ENCODE measurements at regions of chr5 and their contacts with region 1.

Region 1: DNA sequence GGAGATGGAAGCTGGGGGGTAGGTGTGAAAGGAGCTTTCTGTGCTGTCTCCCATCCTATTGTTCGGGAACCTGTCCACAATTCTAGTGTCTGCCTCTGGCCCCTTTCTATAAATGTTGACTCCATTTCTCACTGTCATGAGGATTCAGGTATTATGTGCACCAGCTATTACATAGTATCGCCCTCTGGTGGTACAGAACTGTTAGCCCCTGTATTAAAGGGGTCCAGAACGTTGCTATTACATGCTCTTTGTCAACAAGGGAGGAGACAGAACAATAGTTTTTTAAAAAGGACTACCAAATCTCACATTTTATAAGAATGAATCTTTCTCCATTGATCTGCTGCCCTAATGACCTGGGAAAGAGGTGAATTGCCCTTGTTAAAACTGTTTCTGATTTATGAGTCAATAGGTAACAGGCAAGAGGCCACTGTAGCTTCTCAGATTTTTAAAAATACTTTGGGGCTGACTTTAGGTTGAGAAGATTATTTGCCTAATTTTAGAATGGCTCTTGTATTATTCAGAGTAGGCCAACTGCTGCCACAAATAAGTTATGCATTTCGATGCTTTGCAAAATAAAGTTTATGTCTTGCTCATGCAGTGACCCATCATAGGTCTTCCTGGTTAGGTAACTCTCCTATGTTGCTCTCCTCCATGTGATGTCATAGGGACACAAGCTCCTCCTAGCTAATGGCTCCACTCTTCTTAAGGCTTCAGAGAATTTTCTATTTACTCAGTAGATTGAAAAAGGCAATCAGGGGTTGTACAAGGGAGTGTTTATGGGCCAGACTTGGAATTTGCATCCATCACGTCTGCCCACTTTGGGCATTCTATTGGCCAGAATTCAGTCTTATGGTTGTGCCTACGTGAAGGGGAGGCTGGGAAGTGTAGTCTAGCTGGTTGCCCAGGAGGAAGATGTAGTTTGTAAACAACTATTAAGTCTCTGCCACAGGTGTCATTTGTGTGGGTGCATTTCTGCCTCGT is 20.8 kb downstream of the DCANP1 start:
- DNase-seq: peak in 1 of 2 experiments; percentile 58
- H3K4me3 ChIP-seq: no peak overlapping the region
- H3K4me3 Mint-ChIP-seq: no peak overlapping the region
- H3K27ac Mint-ChIP-seq: no peak overlapping the region
- H3K4me1 ChIP-seq: peaks cover 25% of the 10 kb centered on the region
- H3K4me1 Mint-ChIP-seq: peaks cover 15% of the 10 kb centered on the region
- H3K27me3 ChIP-seq: no peaks in the 10 kb centered on the region
- H3K27me3 Mint-ChIP-seq: no peaks in the 10 kb centered on the region
- CTCF ChIP-seq: peak; percentile 55 to 82

Region 2: GRCh38 chr5:135343413-135343812 is 83.0 kb before region 1 on chr5:
- CTCF ChIA-PET with region 1: no interaction called
- POLR2A ChIA-PET with region 1: no interaction called
- intact Hi-C with region 1: loop called (anchors 5 kb)
- DNase-seq: no peak
- H3K4me3 ChIP-seq: no peak overlapping the region
- H3K4me3 Mint-ChIP-seq: no peak overlapping the region
- H3K27ac Mint-ChIP-seq: no peak overlapping the region
- H3K4me1 ChIP-seq: peaks cover 21% of the 10 kb centered on the region
- H3K4me1 Mint-ChIP-seq: no peaks in the 10 kb centered on the region
- H3K27me3 ChIP-seq: no peaks in the 10 kb centered on the region
- H3K27me3 Mint-ChIP-seq: no peaks in the 10 kb centered on the region
- CTCF ChIP-seq: no peak

Region 3: GRCh38 chr5:135376961-135377624 is 49.3 kb before region 1 on chr5:
- CTCF ChIA-PET with region 1: no interaction called
- POLR2A ChIA-PET with region 1: no interaction called
- intact Hi-C with region 1: loop called (anchors 2 kb)
- DNase-seq: no peak
- H3K4me3 ChIP-seq: no peak overlapping the region
- H3K4me3 Mint-ChIP-seq: no peak overlapping the region
- H3K27ac Mint-ChIP-seq: no peak overlapping the region
- H3K4me1 ChIP-seq: peaks cover 12% of the 10 kb centered on the region; the same call in 1 of the 2 replicates
- H3K4me1 Mint-ChIP-seq: no peaks in the 10 kb centered on the region
- H3K27me3 ChIP-seq: no peaks in the 10 kb centered on the region
- H3K27me3 Mint-ChIP-seq: no peaks in the 10 kb centered on the region
- CTCF ChIP-seq: no peak

Region 4: GRCh38 chr5:135443161-135443960 is 17.0 kb after region 1 on chr5:
- CTCF ChIA-PET with region 1: no interaction called
- POLR2A ChIA-PET with region 1: no interaction called
- intact Hi-C with region 1: no loop called
- DNase-seq: no peak
- H3K4me3 ChIP-seq: no peak overlapping the region
- H3K4me3 Mint-ChIP-seq: no peak overlapping the region
- H3K27ac Mint-ChIP-seq: no peak overlapping the region
- H3K4me1 ChIP-seq: no peaks in the 10 kb centered on the region
- H3K4me1 Mint-ChIP-seq: no peaks in the 10 kb centered on the region
- H3K27me3 ChIP-seq: no peaks in the 10 kb centered on the region
- H3K27me3 Mint-ChIP-seq: no peaks in the 10 kb centered on the region
- CTCF ChIP-seq: no peak

Region 5: GRCh38 chr5:135473927-135474641 is 47.7 kb after region 1 on chr5:
- CTCF ChIA-PET with region 1: no interaction called
- POLR2A ChIA-PET with region 1: no interaction called
- intact Hi-C with region 1: no loop called
- DNase-seq: peak in 1 of 2 experiments; percentile 49
- H3K4me3 ChIP-seq: no peak overlapping the region
- H3K4me3 Mint-ChIP-seq: no peak overlapping the region
- H3K27ac Mint-ChIP-seq: no peak overlapping the region
- H3K4me1 ChIP-seq: peaks cover 9% of the 10 kb centered on the region; the same call in 1 of the 2 replicates
- H3K4me1 Mint-ChIP-seq: no peaks in the 10 kb centered on the region
- H3K27me3 ChIP-seq: no peaks in the 10 kb centered on the region
- H3K27me3 Mint-ChIP-seq: peaks cover 8% of the 10 kb centered on the region
- CTCF ChIP-seq: no peak

Region 6: DNA sequence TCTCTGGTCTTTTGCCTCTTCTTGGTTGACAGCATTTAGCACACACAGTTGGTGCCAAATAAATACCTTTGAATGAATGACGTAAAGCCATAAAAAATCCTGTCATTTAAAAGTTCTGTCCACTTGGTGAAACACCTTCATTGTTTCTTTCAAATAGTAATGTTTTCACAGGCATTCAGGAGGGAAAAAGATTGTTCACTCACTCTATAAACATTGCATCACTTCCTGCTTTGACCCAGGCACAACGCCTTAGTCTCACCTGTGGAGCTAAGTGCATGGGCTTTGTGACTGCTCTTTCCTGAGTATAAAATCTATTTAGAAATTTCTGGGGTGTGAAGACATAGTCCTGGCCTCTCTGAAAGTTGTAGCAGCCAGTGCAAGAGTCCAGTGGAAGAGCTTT is 241.3 kb after region 1 on chr5:
- CTCF ChIA-PET with region 1: no interaction called
- POLR2A ChIA-PET with region 1: no interaction called
- intact Hi-C with region 1: no loop called
- DNase-seq: no peak
- H3K4me3 ChIP-seq: no peak overlapping the region
- H3K4me3 Mint-ChIP-seq: no peak overlapping the region
- H3K27ac Mint-ChIP-seq: no peak overlapping the region
- H3K4me1 ChIP-seq: peaks cover 16% of the 10 kb centered on the region
- H3K4me1 Mint-ChIP-seq: no peaks in the 10 kb centered on the region
- H3K27me3 ChIP-seq: no peaks in the 10 kb centered on the region
- H3K27me3 Mint-ChIP-seq: peaks cover 5% of the 10 kb centered on the region
- CTCF ChIP-seq: no peak

Measured in Caco-2 (cell line).